HCT116 (cell line): ENCODE measurements at regions of chr1 and their contacts with region 1.

Region 1: DNA sequence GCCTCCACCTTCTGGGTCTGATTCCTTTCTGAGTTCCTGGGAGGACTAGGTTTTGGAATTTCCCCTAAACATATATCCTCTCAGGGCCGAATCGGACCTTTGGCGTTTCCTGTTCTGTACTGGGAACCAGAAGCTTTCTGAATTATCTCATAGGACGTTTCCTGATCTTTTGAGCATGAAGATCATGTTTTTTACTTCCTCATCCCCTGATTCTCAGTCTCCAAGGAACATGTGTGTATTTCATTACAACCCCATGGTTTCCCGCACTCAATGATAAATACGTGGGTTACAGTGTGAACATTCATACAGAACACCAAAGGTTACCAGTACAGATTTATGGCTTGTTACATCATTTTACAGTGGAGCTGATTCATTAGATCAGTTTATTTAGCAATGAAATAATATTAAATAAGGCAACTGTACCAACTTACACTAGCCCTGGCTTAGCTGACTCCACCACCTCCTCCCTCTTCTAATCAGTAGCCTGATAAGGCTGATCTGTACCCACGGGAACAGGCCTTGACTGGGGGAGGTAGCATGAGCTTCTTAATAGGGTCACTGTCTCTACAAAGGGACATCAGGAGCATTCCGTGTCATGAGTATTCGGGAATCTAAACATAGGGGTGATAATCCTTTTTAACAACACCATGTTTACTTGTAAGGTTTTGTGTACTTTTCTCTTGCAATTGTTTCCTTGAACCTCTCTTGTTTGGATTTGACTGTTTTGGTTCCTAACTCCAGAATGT is 57.8 kb upstream of the ERRFI1 start:
- DNase-seq: no peak
- ATAC-seq: no peak
- H3K4me3 ChIP-seq: no peak overlapping the region
- H3K27ac ChIP-seq: peak overlapping the region; percentile 97
- H3K4me1 ChIP-seq: peaks cover 88 to 99% of the 10 kb centered on the region in 2 experiments
- H3K27me3 ChIP-seq: no peaks in the 10 kb centered on the region
- CTCF ChIP-seq: no peak
- POLR2A ChIP-seq: no peak
- RAD21 ChIP-seq: no peak

Region 2: DNA sequence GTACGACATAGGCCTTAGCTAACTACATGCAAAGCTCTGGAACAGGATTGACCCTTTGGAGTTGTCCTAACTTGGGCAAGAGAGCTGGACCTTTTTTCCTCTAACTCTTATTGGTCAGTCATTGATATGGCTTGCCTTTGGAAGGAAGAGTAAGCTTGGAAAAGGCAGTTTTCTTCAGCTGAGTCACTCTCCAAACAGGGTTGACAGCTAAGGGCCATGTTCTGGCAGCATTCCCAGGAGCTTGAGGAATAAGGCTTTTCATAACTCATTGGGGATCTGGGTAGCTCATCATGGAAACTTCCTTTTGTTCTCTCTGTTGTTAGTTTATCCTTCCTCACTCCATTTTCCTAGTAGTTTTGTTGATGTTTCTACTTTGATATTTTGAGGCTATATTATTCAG is 43.3 kb before region 1 on chr1:
- CTCF ChIA-PET with region 1: no interaction called
- POLR2A ChIA-PET with region 1: interaction called, 28 read pairs
- RAD21 ChIA-PET with region 1: no interaction called
- intact Hi-C with region 1: no loop called
- DNase-seq: peak; percentile 99
- ATAC-seq: peak; percentile 81
- H3K4me3 ChIP-seq: no peak overlapping the region
- H3K27ac ChIP-seq: peak overlapping the region; percentile 96
- H3K4me1 ChIP-seq: peaks cover 79 to 89% of the 10 kb centered on the region in 2 experiments
- H3K27me3 ChIP-seq: no peaks in the 10 kb centered on the region
- CTCF ChIP-seq: no peak
- POLR2A ChIP-seq: no peak
- RAD21 ChIP-seq: peak; percentile 45

Region 3: GRCh38 chr1:8189931-8190483 is 106.1 kb after region 1 on chr1:
- CTCF ChIA-PET with region 1: no interaction called
- POLR2A ChIA-PET with region 1: interaction called, 39 read pairs
- RAD21 ChIA-PET with region 1: no interaction called
- intact Hi-C with region 1: no loop called
- DNase-seq: peak; percentile 91
- ATAC-seq: peak; percentile 74
- H3K4me3 ChIP-seq: no peak overlapping the region
- H3K27ac ChIP-seq: peak overlapping the region; percentile 91
- H3K4me1 ChIP-seq: peaks cover 78 to 87% of the 10 kb centered on the region in 2 experiments
- H3K27me3 ChIP-seq: no peaks in the 10 kb centered on the region
- CTCF ChIP-seq: no peak
- POLR2A ChIP-seq: no peak
- RAD21 ChIP-seq: no peak

Region 4: DNA sequence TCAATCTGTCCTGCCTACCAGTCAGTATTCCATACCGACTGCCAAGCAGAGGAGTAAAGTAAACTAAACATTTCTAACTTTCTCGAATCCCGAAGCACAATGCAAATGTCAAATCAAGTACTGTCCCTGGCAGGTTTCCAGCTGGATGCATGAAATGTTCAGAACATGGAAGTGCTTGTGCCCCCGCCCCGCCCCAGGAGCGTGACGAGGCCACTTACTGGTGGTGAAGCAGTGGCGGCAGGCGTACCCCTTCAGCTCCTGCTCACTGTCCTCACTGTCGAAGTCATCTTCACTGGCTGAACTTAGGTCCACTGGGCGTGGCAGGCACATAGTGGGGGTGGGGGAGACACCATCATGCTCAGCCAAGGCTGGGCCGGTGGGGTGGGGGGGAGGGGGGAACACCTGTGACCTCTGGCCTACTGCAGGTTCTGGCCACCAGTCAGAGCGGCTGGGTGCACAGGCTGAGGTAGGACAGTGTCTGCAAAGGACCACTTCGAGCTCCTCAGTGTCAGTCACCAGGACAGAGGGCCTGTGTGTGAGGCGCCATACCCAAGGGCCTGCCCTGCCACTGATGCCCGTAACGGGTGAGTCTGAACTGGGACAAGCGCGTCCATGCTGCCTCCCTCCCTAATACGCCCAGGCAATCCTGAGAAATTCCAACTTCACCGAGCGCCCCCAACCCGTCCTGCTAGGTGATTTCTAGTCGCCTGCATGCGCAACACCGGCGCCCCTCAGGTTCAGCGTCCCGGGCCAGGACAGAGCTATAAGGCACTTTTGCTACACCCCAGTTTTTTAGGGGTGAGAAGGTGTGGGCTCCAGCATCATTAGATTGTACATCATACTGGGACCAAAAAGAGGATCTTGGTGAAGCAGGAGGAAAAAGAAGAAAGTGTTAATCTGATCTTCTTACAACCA is 280.9 kb after region 1 on chr1:
- CTCF ChIA-PET with region 1: no interaction called
- POLR2A ChIA-PET with region 1: no interaction called
- RAD21 ChIA-PET with region 1: no interaction called
- intact Hi-C with region 1: no loop called
- DNase-seq: no peak
- ATAC-seq: no peak
- H3K4me3 ChIP-seq: no peak overlapping the region
- H3K27ac ChIP-seq: no peak overlapping the region
- H3K4me1 ChIP-seq: no peaks in the 10 kb centered on the region
- H3K27me3 ChIP-seq: no peaks in the 10 kb centered on the region
- CTCF ChIP-seq: no peak
- POLR2A ChIP-seq: no peak
- RAD21 ChIP-seq: no peak